Breast epithelium (tissue), 4 donors: ENCODE measurements at regions of chr5 and their contacts with region 1.

Region 1: DNA sequence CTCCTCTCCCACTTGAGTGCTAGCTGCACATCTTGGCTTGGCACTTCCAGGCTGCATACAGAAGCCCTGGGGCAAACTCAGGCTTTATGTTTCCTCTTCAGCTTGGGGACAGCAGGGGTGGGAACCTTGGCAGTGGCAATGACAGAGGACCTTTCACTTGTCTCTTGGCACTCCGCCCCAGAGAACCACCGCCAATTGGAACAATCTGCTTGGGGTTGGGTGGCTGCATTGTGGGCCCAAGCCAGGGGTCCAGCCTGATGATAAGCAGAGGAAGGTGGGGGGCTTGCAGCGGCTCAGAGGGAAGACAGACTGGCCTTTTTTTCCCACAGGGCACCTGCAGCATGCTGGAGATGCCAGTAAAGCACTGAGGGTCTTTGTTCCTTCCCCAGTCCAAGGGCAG is 179.0 kb upstream of the NMUR2 start:
- DNase-seq: no peak
- H3K4me3 ChIP-seq: no peak overlapping the region
- H3K27ac ChIP-seq: no peak overlapping the region
- H3K4me1 ChIP-seq: no peaks in the 10 kb centered on the region
- H3K27me3 ChIP-seq: no peaks in the 10 kb centered on the region
- CTCF ChIP-seq: no peak
- POLR2A ChIP-seq: no peak

Region 2: DNA sequence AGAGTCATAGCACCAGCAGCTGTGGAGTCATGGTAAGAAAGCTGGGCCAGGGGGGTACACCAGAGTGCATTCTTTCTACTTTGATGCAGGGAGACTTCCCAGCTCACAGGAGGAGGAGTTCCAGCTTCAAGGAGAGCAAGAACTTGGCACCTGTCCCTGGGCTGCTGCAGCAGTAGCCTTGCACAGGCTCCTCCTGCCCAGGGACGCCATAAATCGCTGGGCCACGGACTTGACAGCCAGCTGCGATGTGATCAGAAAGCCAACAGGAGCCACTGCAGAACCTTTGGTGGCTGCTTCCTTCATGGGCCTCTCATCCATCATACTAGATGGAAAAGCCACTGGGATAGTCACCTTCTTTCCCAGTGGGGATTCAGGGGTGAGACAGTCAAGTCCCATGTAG is 413.8 kb before region 1 on chr5:
- intact Hi-C with region 1: loop called (anchors 5 kb)
- DNase-seq: no peak
- H3K4me3 ChIP-seq: no peak overlapping the region
- H3K27ac ChIP-seq: no peak overlapping the region
- H3K4me1 ChIP-seq: no peaks in the 10 kb centered on the region
- H3K27me3 ChIP-seq: no peaks in the 10 kb centered on the region
- CTCF ChIP-seq: no peak
- POLR2A ChIP-seq: no peak

Region 3: GRCh38 chr5:154211641-154212390 is 1627.7 kb after region 1 on chr5:
- intact Hi-C with region 1: no loop called
- DNase-seq: no peak
- H3K4me3 ChIP-seq: no peak overlapping the region
- H3K27ac ChIP-seq: no peak overlapping the region
- H3K4me1 ChIP-seq: no peaks in the 10 kb centered on the region
- H3K27me3 ChIP-seq: no peaks in the 10 kb centered on the region
- CTCF ChIP-seq: no peak
- POLR2A ChIP-seq: no peak